ENCODE measurements at regions of chr9 and their contacts with region 1.

Region 1: GRCh38 chr9:125487842-125488241 is 219.2 kb downstream of the MAPKAP1 start:
- DNase-seq: no peak
- H3K4me3 ChIP-seq: no peak overlapping the region
- H3K27me3 ChIP-seq: no peaks in the 10 kb centered on the region
- CTCF ChIP-seq: no peak

Region 2: DNA sequence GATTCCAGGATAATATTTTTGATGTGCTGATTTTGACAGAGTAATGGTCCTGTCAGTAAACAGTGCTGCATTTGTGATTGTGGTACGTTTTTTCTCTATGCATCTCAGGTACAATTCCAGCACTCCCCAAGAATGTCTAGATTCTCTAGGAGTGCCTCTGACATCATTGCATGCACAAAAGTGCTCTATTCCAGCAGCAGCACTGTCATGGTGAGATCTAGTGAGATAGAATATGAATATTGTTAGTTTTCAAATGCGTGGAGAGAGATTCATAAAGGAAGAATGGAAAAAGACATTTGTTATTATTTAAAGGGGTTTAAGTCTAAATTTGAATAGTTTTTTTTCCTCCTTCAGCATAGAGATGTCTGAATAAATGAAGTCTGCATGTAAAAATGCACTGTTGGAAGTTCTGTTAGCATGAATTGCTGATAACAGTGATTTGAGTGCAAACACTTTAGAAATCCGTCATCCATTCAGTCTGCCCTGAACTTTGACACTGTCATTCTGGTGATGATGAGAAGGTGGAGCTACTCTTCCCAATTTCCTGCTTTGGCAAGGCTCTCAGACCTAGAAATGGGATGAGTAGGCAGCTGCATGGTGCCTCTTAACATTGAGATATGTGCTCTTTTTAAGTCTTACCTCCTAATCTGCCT is 141.6 kb before region 1 on chr9:
- CTCF ChIA-PET with region 1: no interaction called
- POLR2A ChIA-PET with region 1: no interaction called
- DNase-seq: no peak
- H3K4me3 ChIP-seq: no peak overlapping the region
- H3K27me3 ChIP-seq: no peaks in the 10 kb centered on the region
- CTCF ChIP-seq: no peak

Region 3: DNA sequence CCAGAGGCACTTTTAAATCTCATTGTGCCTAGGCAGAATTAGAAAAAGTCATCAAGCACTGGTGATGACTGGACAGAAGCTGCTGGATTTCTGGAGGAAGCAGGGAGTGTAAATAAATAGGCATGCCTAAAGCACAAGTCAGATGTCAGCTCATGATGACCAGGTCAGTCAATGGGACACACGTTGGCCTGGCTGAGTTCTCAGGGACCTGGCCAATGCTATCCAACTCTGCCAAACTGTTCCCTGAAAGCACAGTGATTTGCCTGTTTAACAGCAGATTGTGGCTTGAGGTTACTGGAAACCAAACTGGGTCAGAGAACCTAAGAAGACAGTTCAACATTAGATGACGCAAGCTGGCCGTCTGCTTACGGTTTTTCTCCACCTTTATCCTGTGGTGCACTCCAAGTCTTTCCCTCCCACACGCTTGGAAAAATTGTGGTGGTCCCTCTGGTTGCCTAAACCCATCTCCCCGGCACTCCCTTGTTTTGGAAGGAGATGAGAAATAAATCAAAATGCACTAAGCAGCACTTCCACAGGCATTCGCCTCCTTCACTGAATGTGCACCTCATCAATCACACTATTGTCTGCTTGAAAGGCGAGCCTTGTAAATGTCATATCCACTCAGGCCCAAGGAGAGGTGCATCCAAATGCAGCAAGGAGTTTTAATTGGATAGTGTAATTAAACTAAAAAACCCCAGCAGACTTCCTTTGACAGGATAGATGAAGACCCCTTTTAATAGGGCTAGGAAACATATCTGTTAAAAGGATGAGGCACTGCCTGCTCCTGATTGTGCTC is 26.8 kb before region 1 on chr9:
- CTCF ChIA-PET with region 1: no interaction called
- POLR2A ChIA-PET with region 1: no interaction called
- DNase-seq: no peak
- H3K4me3 ChIP-seq: no peak overlapping the region
- H3K27me3 ChIP-seq: no peaks in the 10 kb centered on the region
- CTCF ChIP-seq: no peak

Region 4: DNA sequence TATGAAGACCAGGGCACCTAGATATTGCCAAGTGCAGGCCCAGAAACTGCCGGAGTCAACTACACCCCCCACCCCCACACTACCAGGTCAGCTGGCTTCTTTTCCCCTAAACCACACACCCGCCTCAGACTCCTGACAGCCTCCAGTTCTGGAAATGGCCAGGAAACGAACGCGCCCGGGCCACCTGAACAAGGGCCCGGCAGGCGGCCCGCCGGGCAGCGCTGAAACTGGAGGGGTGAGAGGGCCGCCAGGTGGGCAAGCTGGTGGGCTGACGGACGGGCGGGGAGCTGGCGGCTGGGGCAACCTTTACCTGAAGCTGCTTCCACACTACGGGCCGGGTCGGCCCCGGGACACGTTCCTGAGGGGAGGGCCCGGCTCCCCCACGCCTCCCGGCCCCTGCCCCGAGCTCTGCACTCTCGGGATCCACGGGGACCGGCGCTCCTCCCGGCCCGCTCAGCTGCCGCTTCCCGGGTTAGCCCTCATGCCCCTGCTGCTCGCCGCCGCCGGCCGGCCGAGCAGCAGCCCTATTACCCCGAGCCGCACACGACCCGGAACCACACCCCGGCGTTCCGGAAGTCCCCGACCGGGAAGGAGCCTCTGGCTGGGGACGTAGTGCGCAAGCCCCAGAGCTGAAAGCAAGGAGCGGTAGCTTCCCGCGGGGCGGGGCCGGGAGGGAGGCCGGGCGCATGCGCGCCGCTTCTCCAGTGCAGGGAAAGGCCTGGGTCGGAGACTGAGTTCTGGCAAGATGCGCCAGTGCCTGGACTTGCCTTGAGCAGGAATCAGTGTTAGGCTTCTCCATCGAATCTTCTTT is 219.0 kb after region 1 on chr9 and contains the start of gene MAPKAP1:
- CTCF ChIA-PET with region 1: no interaction called
- POLR2A ChIA-PET with region 1: interaction called, 15 read pairs
- DNase-seq: peak; percentile 73
- H3K4me3 ChIP-seq: peak within 1 kb of the TSS; percentile 92
- H3K27me3 ChIP-seq: no peaks in the 10 kb centered on the region
- CTCF ChIP-seq: no peak
- polyA plus RNA-seq, gene MAPKAP1: 113 TPM in 2 replicates

Measured in BJ (cell line).